ENCODE measurements at regions of chr3 and their contacts with region 1.

Region 1: DNA sequence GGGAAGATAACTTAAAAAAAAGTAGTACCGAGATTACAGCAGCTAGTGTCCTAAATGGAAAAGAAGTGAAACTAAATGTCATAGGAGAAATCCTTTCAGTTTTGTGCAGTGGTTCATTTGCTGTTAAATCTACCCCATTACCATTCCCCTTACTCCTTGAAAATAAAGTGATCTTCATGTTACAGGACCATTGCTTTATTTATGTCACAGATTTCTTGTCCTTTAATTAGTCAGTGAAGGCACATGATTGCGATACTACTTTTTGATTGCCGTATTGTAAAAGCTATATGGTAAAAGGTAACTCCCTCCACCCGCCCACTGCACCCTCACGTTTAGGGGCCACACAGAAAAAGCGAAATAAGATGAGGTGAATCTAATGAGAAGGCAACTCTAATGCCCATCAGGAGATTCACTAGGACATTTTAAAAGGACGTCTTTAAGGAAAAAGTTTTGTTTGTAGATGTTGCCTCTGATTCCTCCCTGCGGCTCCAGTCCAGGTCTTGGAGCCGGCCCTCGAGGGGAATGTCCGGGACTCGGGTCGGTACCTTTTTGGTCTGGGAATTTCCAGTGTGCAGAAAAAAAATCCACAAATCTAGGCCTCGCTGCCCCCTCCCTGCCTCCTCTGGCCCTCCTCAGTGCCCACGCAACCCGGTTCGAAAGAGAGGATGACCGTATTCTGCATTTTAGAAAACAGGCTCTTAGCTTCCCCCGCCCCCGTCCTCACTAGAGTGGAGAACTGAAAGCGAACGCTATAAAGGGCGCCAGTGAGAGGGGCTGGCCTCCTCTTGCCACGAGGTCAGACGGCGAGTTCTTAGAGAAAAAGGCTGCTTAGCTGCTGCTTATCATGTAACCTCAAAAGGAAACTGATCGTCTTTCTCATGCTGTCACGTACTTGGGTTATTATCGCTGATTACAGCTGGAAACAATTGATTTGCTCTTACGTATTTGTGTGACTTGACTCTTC is 21.8 kb upstream of the NFKBIZ start:
- DNase-seq: peak; percentile 92
- H3K4me3 ChIP-seq: peak overlapping the region; percentile 71
- H3K27ac ChIP-seq: peak overlapping the region; percentile 68
- H3K4me1 ChIP-seq: peaks cover 38% of the 10 kb centered on the region
- CTCF ChIP-seq: no peak

Region 2: DNA sequence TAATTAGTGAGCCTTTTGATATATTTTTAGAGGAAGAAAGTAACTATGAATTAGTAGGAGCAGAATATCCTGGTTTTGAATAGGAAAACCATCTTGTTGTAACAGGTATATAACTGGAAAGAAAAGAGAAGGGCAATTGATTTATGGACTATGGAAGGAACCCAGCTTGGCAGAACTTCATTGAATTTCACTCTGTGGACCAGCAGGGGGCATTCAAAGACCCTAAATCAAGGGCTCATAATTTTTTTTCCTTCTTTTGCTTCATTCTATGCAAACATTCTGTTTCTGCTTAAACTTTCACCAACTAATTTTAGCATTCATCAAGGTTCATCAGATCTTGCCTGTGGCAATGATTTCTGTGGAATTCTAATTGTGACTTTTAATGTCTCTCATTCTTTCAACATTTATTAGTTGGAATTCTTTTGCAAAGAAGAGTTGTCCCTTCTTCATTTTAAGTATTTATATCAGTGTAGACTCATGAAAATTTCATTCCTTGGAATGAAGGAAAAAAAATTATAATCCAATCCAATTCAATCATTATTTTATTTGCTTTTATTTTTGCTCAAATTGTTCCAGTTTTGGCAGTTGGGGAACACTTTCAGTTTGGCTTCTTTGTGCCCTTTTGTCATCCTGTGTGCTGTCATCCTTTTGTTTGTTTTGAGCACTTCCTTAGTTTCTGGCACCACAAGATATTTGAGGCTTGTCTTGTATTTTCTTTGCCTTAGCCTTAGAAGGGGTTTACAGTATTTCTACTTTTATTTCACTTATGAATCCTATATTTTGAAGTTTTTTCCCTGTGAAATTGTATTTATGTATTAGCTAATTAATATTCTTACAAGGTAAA is 18.1 kb before region 1 on chr3:
- CTCF ChIA-PET with region 1: interaction called, 4 read pairs
- POLR2A ChIA-PET with region 1: interaction called, 19 read pairs
- intact Hi-C with region 1: no loop called
- DNase-seq: peak; percentile 65
- H3K4me3 ChIP-seq: no peak overlapping the region
- H3K27ac ChIP-seq: no peak overlapping the region
- H3K4me1 ChIP-seq: peaks cover 20% of the 10 kb centered on the region
- CTCF ChIP-seq: peak; percentile 94

Region 3: GRCh38 chr3:101816215-101817149 is 11.0 kb before region 1 on chr3:
- CTCF ChIA-PET with region 1: interaction called, 4 read pairs
- POLR2A ChIA-PET with region 1: interaction called, 19 read pairs
- intact Hi-C with region 1: no loop called
- DNase-seq: no peak
- H3K4me3 ChIP-seq: no peak overlapping the region
- H3K27ac ChIP-seq: no peak overlapping the region
- H3K4me1 ChIP-seq: peaks cover 36% of the 10 kb centered on the region
- CTCF ChIP-seq: no peak

Region 4: DNA sequence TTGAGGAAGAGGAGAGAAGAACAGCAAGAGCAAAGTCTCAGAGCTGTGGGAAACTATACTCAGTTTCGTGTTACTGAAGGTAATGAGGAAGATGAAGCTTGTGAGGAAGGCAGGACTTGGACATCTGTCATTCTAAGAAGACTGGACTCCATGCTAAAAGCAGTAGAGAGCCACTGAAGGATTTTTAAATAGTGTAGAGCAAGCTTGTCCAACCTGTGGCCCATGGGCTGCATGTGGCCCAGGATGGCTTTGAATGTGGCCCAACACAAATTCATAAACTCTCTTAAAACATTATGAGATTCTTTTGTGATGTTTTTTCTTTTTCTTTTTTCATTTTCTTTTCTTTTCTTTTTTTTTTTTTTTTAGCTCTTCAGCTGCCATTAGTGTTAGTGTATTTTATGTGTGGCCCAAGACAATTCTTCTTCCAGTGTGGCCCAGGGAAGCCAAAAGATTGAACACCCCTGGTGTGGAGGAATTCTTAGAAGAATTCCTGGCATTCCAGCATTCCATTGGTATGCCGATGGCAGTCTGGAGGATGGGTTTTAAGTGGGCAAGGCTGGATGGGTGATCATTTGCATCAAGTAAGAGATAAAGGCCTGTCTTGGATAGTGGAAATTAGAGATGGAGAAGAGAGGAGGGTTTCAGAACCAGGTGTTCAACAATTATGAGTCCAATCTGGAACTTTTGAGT is 14.9 kb after region 1 on chr3:
- CTCF ChIA-PET with region 1: no interaction called
- POLR2A ChIA-PET with region 1: interaction called, 33 read pairs
- intact Hi-C with region 1: no loop called
- DNase-seq: no peak
- H3K4me3 ChIP-seq: no peak overlapping the region
- H3K27ac ChIP-seq: no peak overlapping the region
- H3K4me1 ChIP-seq: peaks cover 42% of the 10 kb centered on the region
- CTCF ChIP-seq: no peak

Region 5: DNA sequence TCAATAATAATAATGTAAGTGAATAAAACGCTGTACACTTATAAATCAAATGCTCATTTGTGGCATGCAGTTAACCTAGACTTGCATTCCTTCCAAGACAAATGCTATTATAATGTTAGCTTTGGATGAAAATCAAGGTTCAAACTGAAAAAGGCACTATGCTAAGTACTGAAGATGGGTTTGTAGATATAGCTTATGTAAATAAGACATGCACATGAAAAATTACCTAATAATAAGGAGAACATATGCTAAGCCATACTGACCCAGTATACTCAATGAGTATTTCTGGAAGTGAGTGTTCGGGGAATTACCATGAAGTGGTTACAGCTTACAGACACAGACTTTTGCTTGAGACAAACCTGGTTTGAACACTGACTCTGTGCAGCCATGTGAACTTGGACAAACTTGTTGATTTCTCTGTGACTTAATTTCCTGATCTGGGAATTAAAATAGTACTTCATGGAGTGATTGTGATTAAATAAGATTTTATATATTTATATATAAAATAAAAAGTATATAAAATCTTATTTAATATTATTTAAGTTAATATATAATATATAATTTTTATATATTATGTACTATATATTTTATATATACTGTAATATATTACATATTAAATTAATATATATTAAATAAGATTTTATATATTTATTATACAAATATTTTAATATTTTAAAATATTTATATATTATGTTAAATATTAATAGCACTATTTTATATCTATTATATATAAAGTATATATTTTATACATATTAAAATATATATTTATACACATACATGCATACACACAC is 766.5 kb after region 1 on chr3:
- CTCF ChIA-PET with region 1: no interaction called
- POLR2A ChIA-PET with region 1: no interaction called
- intact Hi-C with region 1: no loop called
- DNase-seq: no peak
- H3K4me3 ChIP-seq: no peak overlapping the region
- H3K27ac ChIP-seq: no peak overlapping the region
- H3K4me1 ChIP-seq: no peaks in the 10 kb centered on the region
- CTCF ChIP-seq: no peak